B cell (primary cell): ENCODE measurements at regions of chr4 and their contacts with region 1.

Region 1: GRCh38 chr4:8228319-8229250 is 29.5 kb downstream of the SH3TC1 start:
- DNase-seq: peak; percentile 75
- ATAC-seq: peak; percentile 73
- H3K4me3 ChIP-seq: peak overlapping the region in 1 of 5 experiments; percentile 14
- H3K4me3 Mint-ChIP-seq: peak overlapping the region; percentile 74
- H3K27ac ChIP-seq: peak overlapping the region; percentile 68 to 73
- H3K27ac Mint-ChIP-seq: peak overlapping the region; percentile 92
- H3K4me1 ChIP-seq: peaks cover 17 to 41% of the 10 kb centered on the region in 2 donors
- H3K4me1 Mint-ChIP-seq: peaks cover 39% of the 10 kb centered on the region
- H3K27me3 ChIP-seq: no peaks in the 10 kb centered on the region
- H3K27me3 Mint-ChIP-seq: no peaks in the 10 kb centered on the region
- CTCF ChIP-seq: no peak

Region 2: DNA sequence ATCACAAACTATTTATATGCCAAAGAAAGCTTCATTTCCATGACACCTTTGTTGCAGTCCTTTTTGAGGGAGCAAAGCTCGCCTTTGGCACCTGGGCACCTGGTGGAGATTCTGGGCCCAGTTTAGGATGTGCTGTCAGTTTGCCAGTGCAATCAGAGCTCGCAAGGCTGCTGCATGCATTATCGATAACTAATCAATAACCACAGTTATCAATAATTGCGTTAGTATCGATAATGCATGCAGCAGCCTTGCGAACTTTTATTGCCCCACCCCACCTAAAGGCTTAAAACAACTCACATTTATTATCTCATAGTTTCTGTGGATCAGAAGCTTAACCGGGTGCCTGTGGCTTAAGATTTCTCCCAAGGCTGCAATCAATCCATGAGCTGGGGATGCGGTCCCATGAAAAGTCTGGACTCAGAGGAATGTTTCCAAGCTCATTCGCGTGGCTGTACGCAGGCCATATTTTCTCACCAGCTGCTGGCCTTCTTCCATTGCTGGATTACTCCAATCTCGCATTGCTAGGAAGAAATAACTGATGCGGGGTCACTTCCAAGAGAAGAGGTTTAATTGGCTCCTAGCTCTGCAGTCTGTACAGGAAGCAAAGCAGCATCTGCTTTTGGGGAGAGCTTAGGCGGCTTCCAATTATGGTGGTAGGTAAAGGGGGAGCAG is 282.7 kb before region 1 on chr4:
- CTCF ChIA-PET with region 1: no interaction called
- POLR2A ChIA-PET with region 1: no interaction called
- intact Hi-C with region 1: no loop called
- DNase-seq: no peak
- ATAC-seq: no peak
- H3K4me3 ChIP-seq: no peak overlapping the region
- H3K4me3 Mint-ChIP-seq: no peak overlapping the region
- H3K27ac ChIP-seq: no peak overlapping the region
- H3K27ac Mint-ChIP-seq: no peak overlapping the region
- H3K4me1 ChIP-seq: no peaks in the 10 kb centered on the region
- H3K4me1 Mint-ChIP-seq: no peaks in the 10 kb centered on the region
- H3K27me3 ChIP-seq: no peaks in the 10 kb centered on the region
- H3K27me3 Mint-ChIP-seq: peaks cover 33% of the 10 kb centered on the region
- CTCF ChIP-seq: no peak

Region 3: GRCh38 chr4:8090312-8090711 is 138.3 kb before region 1 on chr4:
- CTCF ChIA-PET with region 1: no interaction called
- POLR2A ChIA-PET with region 1: no interaction called
- intact Hi-C with region 1: no loop called
- DNase-seq: no peak
- ATAC-seq: no peak
- H3K4me3 ChIP-seq: no peak overlapping the region
- H3K4me3 Mint-ChIP-seq: no peak overlapping the region
- H3K27ac ChIP-seq: no peak overlapping the region
- H3K27ac Mint-ChIP-seq: no peak overlapping the region
- H3K4me1 ChIP-seq: no peaks in the 10 kb centered on the region
- H3K4me1 Mint-ChIP-seq: no peaks in the 10 kb centered on the region
- H3K27me3 ChIP-seq: no peaks in the 10 kb centered on the region
- H3K27me3 Mint-ChIP-seq: no peaks in the 10 kb centered on the region
- CTCF ChIP-seq: no peak

Region 4: DNA sequence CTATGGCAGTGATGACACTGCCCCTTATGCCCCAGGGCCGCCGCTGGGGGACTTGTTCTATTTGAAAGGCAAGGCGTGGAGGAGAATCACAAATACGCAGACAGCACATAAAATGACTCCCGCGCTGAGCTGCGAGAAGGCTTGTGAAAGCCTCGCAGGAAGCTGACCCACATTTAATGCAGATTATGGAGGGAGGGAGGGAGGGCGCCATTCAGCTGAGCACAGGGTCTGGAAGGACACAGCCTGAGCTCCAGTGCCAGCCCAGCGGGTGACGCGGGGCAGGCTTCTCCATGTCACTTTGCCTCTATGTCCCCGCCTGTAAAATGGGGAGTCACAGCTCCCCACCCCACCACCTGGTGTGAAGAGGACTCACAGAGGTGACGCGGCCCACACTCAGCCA is 84.2 kb before region 1 on chr4:
- CTCF ChIA-PET with region 1: no interaction called
- POLR2A ChIA-PET with region 1: no interaction called
- intact Hi-C with region 1: no loop called
- DNase-seq: no peak
- ATAC-seq: no peak
- H3K4me3 ChIP-seq: no peak overlapping the region
- H3K4me3 Mint-ChIP-seq: no peak overlapping the region
- H3K27ac ChIP-seq: no peak overlapping the region
- H3K27ac Mint-ChIP-seq: no peak overlapping the region
- H3K4me1 ChIP-seq: no peaks in the 10 kb centered on the region
- H3K4me1 Mint-ChIP-seq: no peaks in the 10 kb centered on the region
- H3K27me3 ChIP-seq: peaks cover 0 to 26% (median 1%) of the 10 kb centered on the region in 4 experiments
- H3K27me3 Mint-ChIP-seq: peaks cover 12% of the 10 kb centered on the region
- CTCF ChIP-seq: no peak

Region 5: GRCh38 chr4:8192748-8193738 is 35.5 kb before region 1 on chr4:
- CTCF ChIA-PET with region 1: interaction called, 20 read pairs
- POLR2A ChIA-PET with region 1: interaction called, 50 read pairs
- intact Hi-C with region 1: loop called (anchors 5 kb)
- DNase-seq: peak; percentile 92
- ATAC-seq: peak; percentile 98
- H3K4me3 ChIP-seq: no peak overlapping the region
- H3K4me3 Mint-ChIP-seq: peak overlapping the region; percentile 34
- H3K27ac ChIP-seq: peak overlapping the region; percentile 24 to 34
- H3K27ac Mint-ChIP-seq: peak overlapping the region; percentile 83
- H3K4me1 ChIP-seq: peaks cover 16 to 31% of the 10 kb centered on the region in 2 donors
- H3K4me1 Mint-ChIP-seq: peaks cover 35% of the 10 kb centered on the region
- H3K27me3 ChIP-seq: peaks cover 0 to 5% (median 1%) of the 10 kb centered on the region in 4 experiments
- H3K27me3 Mint-ChIP-seq: no peaks in the 10 kb centered on the region
- CTCF ChIP-seq: peak; percentile 68